Heart right ventricle (tissue), 16 donors: ENCODE measurements at regions of chr2 and their contacts with region 1.

Region 1: DNA sequence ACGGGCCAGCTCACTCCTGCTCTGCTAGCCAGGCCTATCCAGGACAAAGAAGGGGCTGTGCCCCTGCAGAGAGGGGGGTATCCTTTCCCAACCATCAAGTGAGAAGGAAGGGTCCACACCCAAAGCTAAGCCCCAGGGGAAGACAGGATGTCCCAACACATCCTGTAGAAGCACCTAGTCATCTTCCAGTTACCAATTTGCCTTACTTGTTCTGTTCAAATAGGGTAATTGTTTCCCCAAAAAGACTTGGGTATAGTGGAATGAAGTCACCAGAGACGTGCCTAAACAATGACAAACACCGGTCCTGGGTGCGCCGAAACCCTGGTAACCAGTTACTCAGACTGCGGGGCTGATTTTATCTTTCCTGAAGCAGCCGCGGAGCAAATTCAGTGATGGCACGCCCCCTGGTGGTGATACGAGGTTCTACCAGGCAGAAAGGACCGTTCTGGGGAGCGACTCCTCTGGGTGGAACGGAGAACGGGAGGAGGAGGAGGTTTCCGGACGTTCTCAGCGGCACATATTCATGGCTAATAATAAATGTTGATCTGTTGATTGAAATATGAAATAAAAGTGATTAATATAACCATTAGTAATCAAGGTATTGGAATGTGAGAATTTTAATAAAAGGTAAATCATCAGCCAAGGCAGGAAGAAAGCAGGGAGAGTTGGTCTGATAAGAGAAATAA is 109.3 kb upstream of the STON1 start:
- DNase-seq: peak; percentile 88 to 91
- ATAC-seq: peak; percentile 81 to 98 (median 92)
- H3K4me3 ChIP-seq: peak overlapping the region in 6 of 10 donors; percentile 8 to 32 (median 24)
- H3K27ac ChIP-seq: peak overlapping the region in 9 of 10 donors; percentile 16 to 76 (median 44)
- H3K4me1 ChIP-seq: peaks cover 6 to 28% (median 20%) of the 10 kb centered on the region in 9 donors
- H3K27me3 ChIP-seq: no peaks in the 10 kb centered on the region
- CTCF ChIP-seq: peak; percentile 94 to 99 (median 99)

Region 2: DNA sequence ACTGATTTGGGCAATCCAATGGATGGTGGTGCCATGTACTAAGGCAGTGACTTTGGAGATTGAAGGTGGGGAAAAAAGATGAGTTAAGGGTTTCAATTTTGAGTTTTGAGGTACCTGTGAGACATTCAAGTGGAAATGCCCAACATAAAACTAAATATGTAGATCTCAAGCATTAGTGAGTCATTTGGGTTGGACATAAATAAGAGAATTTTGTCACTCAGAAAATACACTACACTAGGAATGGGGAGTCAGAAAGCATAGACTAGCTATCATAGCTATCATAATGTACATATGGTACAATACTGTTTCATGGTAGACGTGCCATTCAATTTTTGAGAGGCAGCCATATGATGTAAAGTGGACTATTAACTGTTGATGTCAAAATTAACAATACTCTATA is 570.5 kb before region 1 on chr2:
- intact Hi-C with region 1: loop called in 4 of 10 experiments (anchors 5 to 10 kb)
- DNase-seq: no peak
- ATAC-seq: no peak
- H3K4me3 ChIP-seq: no peak overlapping the region
- H3K27ac ChIP-seq: no peak overlapping the region
- H3K4me1 ChIP-seq: peaks cover 0 to 60% (median 18%) of the 10 kb centered on the region in 9 donors
- H3K27me3 ChIP-seq: no peaks in the 10 kb centered on the region
- CTCF ChIP-seq: no peak

Region 3: DNA sequence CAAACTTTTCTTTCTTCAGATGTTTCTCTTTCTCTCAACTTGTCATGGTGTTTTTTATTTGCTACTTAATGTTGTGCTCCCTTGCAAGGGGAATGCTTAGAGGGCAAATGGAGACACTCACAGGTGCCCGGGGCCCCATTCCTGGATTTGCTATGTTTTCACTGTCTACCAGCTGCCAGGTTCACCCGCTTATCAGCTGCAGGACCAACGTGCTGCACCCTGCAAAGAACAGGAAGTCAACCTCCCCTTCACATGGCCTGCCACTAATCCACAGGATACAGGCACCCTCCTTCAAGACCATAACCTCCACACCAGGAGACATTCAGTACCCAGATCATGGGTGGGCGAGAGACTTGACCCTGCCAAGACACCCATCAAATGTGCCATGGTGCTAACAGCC is 128.3 kb before region 1 on chr2:
- intact Hi-C with region 1: no loop called
- DNase-seq: no peak
- ATAC-seq: no peak
- H3K4me3 ChIP-seq: no peak overlapping the region
- H3K27ac ChIP-seq: no peak overlapping the region
- H3K4me1 ChIP-seq: peaks cover 0 to 5% (median 0%) of the 10 kb centered on the region in 9 donors
- H3K27me3 ChIP-seq: no peaks in the 10 kb centered on the region
- CTCF ChIP-seq: no peak

Region 4: DNA sequence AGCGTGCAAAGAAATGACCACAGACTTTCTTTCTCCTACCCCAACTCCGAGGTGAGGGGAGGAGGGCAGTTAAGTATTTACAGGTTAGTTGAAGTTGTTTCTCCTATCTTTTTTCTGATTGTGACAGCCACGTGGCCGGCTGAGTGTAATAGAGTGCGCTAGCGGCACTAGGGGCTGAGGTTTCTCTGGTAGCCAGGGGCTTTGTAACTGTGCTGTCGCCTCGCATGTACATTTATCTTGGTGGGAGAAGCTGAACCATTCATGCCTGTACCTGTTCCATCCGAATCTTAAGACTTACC is 104.8 kb before region 1 on chr2:
- intact Hi-C with region 1: no loop called
- DNase-seq: no peak
- ATAC-seq: no peak
- H3K4me3 ChIP-seq: peak overlapping the region; percentile 81 to 98 (median 92)
- H3K27ac ChIP-seq: peak overlapping the region; percentile 77 to 99 (median 98)
- H3K4me1 ChIP-seq: peaks cover 0 to 70% (median 17%) of the 10 kb centered on the region in 9 donors
- H3K27me3 ChIP-seq: no peaks in the 10 kb centered on the region
- CTCF ChIP-seq: no peak